ENCODE measurements at regions of chr2 and their contacts with region 1.

Region 1: GRCh38 chr2:233387667-233388528 is 33.6 kb downstream of the DGKD start:
- DNase-seq: no peak
- ATAC-seq: no peak
- H3K4me3 Mint-ChIP-seq: no peak overlapping the region
- H3K27ac Mint-ChIP-seq: peak overlapping the region; percentile 95
- H3K4me1 Mint-ChIP-seq: peaks cover 63% of the 10 kb centered on the region
- H3K27me3 Mint-ChIP-seq: no peaks in the 10 kb centered on the region
- CTCF ChIP-seq: no peak

Region 2: DNA sequence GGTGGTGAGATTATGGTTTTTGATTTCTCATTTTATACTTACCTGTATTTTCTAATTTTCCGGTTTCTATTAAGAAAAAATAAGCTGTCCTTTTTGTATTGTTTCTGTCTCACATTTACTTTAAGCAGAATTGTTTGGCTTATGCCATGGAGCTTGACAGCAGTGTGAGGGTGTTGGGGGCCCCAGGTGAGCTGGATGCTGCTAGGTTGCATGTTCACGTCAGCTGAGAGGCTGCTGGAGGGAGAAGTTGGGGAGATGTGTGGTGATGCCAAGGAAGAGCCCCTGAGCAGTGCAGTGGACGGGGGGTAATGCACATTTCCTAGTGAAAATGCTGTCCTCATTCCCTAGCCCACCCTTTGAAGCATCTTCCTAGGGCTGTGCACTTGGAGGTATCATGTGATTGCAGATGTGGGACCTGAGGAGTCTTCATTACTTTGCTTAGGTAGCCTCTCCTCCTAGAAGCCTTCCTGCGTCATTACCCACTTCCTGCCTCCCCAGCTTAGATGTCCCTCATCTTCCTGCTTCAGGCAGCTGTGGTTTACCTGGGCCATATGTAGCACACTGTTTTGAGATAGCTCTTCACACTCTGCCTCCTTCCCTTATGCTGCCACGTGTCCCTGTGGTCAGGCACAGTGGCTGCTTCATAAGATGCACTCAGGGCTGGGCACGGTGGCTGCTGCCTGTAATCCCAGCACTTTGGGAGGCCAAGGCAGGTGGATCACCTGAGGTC is 120.2 kb before region 1 on chr2:
- CTCF ChIA-PET with region 1: interaction called, 6 read pairs
- POLR2A ChIA-PET with region 1: no interaction called
- intact Hi-C with region 1: loop called (anchors 5 kb)
- DNase-seq: peak; percentile 20
- ATAC-seq: peak; percentile 91
- H3K4me3 Mint-ChIP-seq: peak overlapping the region; percentile 56
- H3K27ac Mint-ChIP-seq: peak overlapping the region; percentile 82
- H3K4me1 Mint-ChIP-seq: peaks cover 51% of the 10 kb centered on the region
- H3K27me3 Mint-ChIP-seq: no peaks in the 10 kb centered on the region
- CTCF ChIP-seq: no peak

Measured in activated B cell treated with CpG ODN at 0.5 μM for 24 hours (primary cell).